IMR-90 (cell line): ENCODE measurements at regions of chr2 and their contacts with region 1.

Region 1: DNA sequence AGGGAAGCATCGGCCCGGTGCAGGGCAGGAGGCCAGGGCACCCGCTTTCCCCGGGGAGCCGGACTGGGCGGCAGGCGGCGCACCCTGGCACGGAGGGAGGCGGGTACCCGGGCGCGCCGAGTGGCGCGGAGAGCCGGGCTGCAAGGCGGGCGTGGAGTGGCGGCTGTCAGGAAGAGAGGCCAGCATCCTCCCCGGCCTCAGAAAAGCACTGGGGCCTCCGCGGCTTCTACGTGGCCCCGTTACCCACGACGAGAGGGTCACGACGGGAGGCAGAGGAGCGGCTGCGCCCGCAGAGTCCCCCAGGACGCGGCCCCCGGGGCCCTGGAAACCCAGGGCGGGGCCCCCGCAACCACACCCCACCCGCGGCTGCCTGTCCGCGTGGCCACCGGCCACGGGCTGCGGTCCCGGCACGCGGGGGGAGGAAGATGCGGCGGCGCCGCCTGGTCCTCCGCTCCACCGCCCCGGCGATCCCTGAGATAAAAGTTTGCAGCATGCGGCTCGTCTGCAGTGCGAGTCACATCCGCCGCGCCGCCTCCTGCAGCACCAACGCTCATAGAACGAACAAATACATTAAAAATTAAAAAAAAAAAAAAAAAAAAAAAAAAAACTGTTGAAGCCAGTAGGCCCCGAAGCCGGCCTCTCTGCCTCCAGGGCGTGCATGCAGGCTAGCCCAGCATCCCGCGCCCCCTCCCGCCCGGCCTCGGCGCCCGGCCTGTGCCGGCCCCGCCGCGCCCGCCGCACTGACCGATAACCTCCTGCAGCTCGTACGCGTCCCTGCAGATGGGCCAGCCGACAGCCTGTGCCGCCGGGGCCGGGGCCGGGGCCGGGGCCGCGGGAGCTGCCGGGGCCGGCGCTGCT is 683 bp downstream of the STK39 start:
- DNase-seq: peak; percentile 64
- ATAC-seq: peak; percentile 59
- H3K4me3 ChIP-seq: peak overlapping the region; percentile 77
- H3K27ac ChIP-seq: peak overlapping the region; percentile 86
- H3K4me1 ChIP-seq: peaks cover 10% of the 10 kb centered on the region
- H3K27me3 ChIP-seq: no peaks in the 10 kb centered on the region
- CTCF ChIP-seq: peak; percentile 33
- POLR2A ChIP-seq: no peak
- RAD21 ChIP-seq: peak; percentile 23; the same call in 1 of the 2 replicates

Region 2: GRCh38 chr2:167964650-167965413 is 281.9 kb before region 1 on chr2:
- CTCF ChIA-PET with region 1: no interaction called
- POLR2A ChIA-PET with region 1: no interaction called
- dilution Hi-C with region 1: no loop called
- in situ Hi-C with region 1: no loop called
- intact Hi-C with region 1: loop called (anchors 5 kb)
- DNase-seq: peak; percentile 18
- ATAC-seq: no peak
- H3K4me3 ChIP-seq: no peak overlapping the region
- H3K27ac ChIP-seq: peak overlapping the region; percentile 17; the same call in 1 of the 2 replicates
- H3K4me1 ChIP-seq: peaks cover 16% of the 10 kb centered on the region
- H3K27me3 ChIP-seq: no peaks in the 10 kb centered on the region
- CTCF ChIP-seq: peak; percentile 56
- POLR2A ChIP-seq: no peak
- RAD21 ChIP-seq: peak; percentile 47

Region 3: GRCh38 chr2:168136392-168136977 is 110.2 kb before region 1 on chr2:
- CTCF ChIA-PET with region 1: interaction called, 3 read pairs
- POLR2A ChIA-PET with region 1: no interaction called
- dilution Hi-C with region 1: no loop called
- in situ Hi-C with region 1: no loop called
- intact Hi-C with region 1: loop called (anchors 1 kb)
- DNase-seq: peak; percentile 48
- ATAC-seq: 0 out of 2 replicates have a peak, but pooled peaks have one; percentile 36
- H3K4me3 ChIP-seq: no peak overlapping the region
- H3K27ac ChIP-seq: no peak overlapping the region
- H3K4me1 ChIP-seq: peaks cover 4% of the 10 kb centered on the region
- H3K27me3 ChIP-seq: no peaks in the 10 kb centered on the region
- CTCF ChIP-seq: peak; percentile 52
- POLR2A ChIP-seq: no peak
- RAD21 ChIP-seq: peak; percentile 47

Region 4: GRCh38 chr2:168155046-168155445 is 91.7 kb before region 1 on chr2:
- CTCF ChIA-PET with region 1: no interaction called
- POLR2A ChIA-PET with region 1: no interaction called
- dilution Hi-C with region 1: no loop called
- in situ Hi-C with region 1: no loop called
- intact Hi-C with region 1: loop called (anchors 1 kb)
- DNase-seq: peak; percentile 79
- ATAC-seq: peak; percentile 70
- H3K4me3 ChIP-seq: no peak overlapping the region
- H3K27ac ChIP-seq: peak overlapping the region; percentile 83; the same call in 1 of the 2 replicates
- H3K4me1 ChIP-seq: peaks cover 15% of the 10 kb centered on the region
- H3K27me3 ChIP-seq: no peaks in the 10 kb centered on the region
- CTCF ChIP-seq: no peak
- POLR2A ChIP-seq: no peak
- RAD21 ChIP-seq: no peak

Region 5: DNA sequence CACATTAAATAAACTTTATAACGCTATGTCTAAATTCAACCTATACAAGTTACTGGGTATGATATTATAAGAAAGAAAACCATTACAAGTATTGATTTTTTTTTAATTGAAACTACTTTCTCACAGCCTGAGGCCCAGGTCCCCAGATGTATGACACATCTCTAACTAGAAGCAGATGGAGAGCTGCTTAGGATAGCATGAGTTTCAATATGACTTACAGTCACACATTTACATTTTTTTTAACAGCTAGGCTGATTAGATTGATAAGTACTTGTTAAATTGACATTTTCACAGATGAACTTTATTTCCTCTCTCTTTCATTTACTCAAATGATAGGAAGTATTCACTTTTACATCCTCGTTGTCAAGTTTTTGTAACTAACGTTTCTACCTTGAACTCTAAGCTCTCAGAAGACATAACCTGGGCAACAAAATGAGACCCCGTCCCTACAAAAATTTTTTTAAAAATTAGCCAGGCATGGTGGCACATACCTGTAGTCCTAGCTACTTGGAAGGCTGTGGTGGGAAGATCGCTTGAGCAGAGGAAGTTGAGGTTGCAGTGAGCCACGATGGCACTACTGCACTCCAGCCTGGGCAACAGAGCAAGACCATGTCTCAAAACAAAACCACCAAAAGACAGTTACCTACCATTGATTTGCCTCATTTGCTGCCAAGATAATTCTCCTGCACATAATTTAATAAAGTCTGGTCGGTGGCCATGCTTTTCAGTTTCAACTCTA is 51.8 kb before region 1 on chr2:
- CTCF ChIA-PET with region 1: no interaction called
- POLR2A ChIA-PET with region 1: no interaction called
- dilution Hi-C with region 1: no loop called
- in situ Hi-C with region 1: no loop called
- intact Hi-C with region 1: no loop called
- DNase-seq: peak; percentile 63
- ATAC-seq: peak; percentile 27; the same call in 1 of the 2 replicates
- H3K4me3 ChIP-seq: no peak overlapping the region
- H3K27ac ChIP-seq: no peak overlapping the region
- H3K4me1 ChIP-seq: peaks cover 19% of the 10 kb centered on the region
- H3K27me3 ChIP-seq: no peaks in the 10 kb centered on the region
- CTCF ChIP-seq: no peak
- POLR2A ChIP-seq: no peak
- RAD21 ChIP-seq: no peak

Region 6: GRCh38 chr2:168210895-168211570 is 35.7 kb before region 1 on chr2:
- CTCF ChIA-PET with region 1: no interaction called
- POLR2A ChIA-PET with region 1: no interaction called
- dilution Hi-C with region 1: no loop called
- in situ Hi-C with region 1: no loop called
- intact Hi-C with region 1: loop called (anchors 5 kb)
- DNase-seq: peak; percentile 95
- ATAC-seq: peak; percentile 84
- H3K4me3 ChIP-seq: no peak overlapping the region
- H3K27ac ChIP-seq: peak overlapping the region; percentile 93
- H3K4me1 ChIP-seq: peaks cover 22% of the 10 kb centered on the region
- H3K27me3 ChIP-seq: no peaks in the 10 kb centered on the region
- CTCF ChIP-seq: no peak
- POLR2A ChIP-seq: no peak
- RAD21 ChIP-seq: no peak

Region 7: GRCh38 chr2:168455648-168456520 is 209.2 kb after region 1 on chr2 and contains the start of gene CERS6:
- CTCF ChIA-PET with region 1: no interaction called
- POLR2A ChIA-PET with region 1: no interaction called
- dilution Hi-C with region 1: no loop called
- in situ Hi-C with region 1: no loop called
- intact Hi-C with region 1: loop called (anchors 10 kb)
- DNase-seq: peak; percentile 90
- ATAC-seq: peak; percentile 99
- H3K4me3 ChIP-seq: peak within 1 kb of the TSS; percentile 83
- H3K27ac ChIP-seq: peak within 1 kb of the TSS; percentile 52
- H3K4me1 ChIP-seq: no peaks in the 10 kb centered on the region
- H3K27me3 ChIP-seq: peaks cover 2% of the 10 kb centered on the region; the same call in 1 of the 2 replicates
- CTCF ChIP-seq: no peak
- POLR2A ChIP-seq: peak; percentile 58; the same call in 1 of the 2 replicates
- RAD21 ChIP-seq: no peak
- total RNA-seq, gene CERS6: 5.7 and 9.4 TPM in 2 replicates

Region 8: DNA sequence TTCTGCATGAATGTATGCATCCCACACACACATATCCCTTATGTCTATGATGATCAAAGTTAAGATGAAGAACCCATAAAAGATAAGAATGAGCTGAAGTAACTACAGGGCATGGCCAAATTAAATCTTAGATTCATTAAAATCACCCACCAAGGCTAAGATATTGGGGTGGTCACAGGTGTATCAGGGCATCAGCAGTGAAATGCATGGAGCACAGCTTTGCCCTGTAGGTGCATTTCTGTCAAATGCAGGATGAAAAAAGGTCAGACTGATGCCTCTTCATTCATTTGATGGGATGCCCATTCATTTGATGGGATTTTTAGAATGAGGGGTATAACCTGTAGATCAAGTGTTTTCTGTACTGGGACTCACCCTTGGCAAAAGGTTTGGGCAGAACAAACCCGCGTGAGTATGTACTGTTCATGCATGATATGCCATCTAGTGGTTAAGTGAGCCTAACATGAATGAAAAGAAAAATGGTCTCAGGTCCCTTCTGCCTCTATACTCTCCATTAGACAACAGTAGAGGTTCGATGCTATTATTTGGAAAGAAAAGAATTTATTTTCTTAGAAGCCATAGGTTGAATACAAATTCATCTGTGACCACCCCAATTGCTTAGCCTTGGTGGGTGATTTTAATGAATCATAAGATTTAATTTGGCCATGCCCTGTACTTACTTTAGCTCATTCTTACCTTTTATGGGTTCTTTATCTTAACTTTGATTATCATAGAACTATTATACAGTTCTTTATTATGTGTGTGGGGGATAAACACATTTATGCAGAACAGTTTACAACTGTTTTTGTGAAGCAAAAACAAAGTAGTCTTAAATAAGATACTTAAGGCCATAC is 512.5 kb after region 1 on chr2:
- CTCF ChIA-PET with region 1: no interaction called
- POLR2A ChIA-PET with region 1: no interaction called
- dilution Hi-C with region 1: no loop called
- in situ Hi-C with region 1: no loop called
- intact Hi-C with region 1: loop called (anchors 5 kb)
- DNase-seq: peak; percentile 59
- ATAC-seq: peak; percentile 95
- H3K4me3 ChIP-seq: no peak overlapping the region
- H3K27ac ChIP-seq: no peak overlapping the region
- H3K4me1 ChIP-seq: no peaks in the 10 kb centered on the region
- H3K27me3 ChIP-seq: no peaks in the 10 kb centered on the region
- CTCF ChIP-seq: peak; percentile 62
- POLR2A ChIP-seq: no peak
- RAD21 ChIP-seq: peak; percentile 66